HepG2 (cell line): ENCODE measurements at regions of chr14 and their contacts with region 1.

Region 1: DNA sequence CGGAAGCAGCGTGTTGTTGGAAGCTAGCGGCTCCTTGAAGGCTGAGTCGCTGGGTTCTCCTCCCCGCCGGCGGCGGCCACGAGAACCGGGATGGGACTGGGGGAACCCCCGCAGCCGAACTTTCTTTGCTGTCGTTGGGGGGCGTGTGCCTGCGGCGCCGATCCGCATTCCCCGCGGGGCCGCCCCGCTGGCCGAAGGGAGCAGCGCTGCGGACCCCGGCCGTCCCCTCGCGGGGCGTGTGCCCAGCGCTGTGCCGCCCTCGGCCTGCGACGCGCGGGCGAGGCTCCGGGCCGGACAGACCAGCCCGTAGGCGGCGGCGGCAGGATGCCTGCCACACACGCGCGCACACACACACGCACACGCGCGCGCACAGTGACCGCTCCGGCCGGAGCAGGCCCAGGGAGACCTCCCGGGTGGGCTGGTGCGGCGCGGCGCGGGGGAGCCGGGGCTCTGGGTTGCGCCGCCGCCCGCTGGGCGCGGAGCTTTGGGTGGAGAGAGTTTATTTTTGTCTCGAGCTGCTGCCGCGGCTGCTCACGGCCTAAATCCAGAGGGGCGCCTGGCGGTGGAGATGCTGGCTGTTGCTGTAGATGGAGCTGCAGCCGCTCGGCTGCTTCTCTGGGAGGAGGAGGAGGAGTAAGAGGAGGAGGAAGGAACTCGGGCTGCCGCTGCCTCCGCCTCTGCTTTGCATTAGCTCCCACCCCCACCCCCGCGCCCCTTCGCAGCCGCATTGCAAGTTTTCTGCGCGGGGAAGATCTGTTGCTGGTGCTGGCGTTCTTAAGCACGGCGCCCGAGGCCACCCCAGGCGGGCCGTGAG is at the start of gene SAMD4A:
- DNase-seq: peak; percentile 48
- ATAC-seq: peak; percentile 19
- H3K4me3 ChIP-seq: peak within 1 kb of the TSS; percentile 73 to 93 (median 89)
- H3K27ac ChIP-seq: peak within 1 kb of the TSS; percentile 97
- H3K4me1 ChIP-seq: peaks cover 35% of the 10 kb centered on the region
- H3K27me3 ChIP-seq: no peaks in the 10 kb centered on the region
- CTCF ChIP-seq: no peak; the same call in none of the 2 replicates
- EP300 ChIP-seq: no peak
- POLR2A ChIP-seq: no peak; a peak in 1 of 4 replicates
- RAD21 ChIP-seq: no peak
- total RNA-seq, gene SAMD4A: 6.9 and 13.0 TPM in 2 replicates

Region 2: GRCh38 chr14:54343272-54344121 is 223.1 kb before region 1 on chr14:
- CTCF ChIA-PET with region 1: no interaction called
- POLR2A ChIA-PET with region 1: no interaction called
- in situ Hi-C with region 1: no loop called
- intact Hi-C with region 1: no loop called
- DNase-seq: peak; percentile 34
- ATAC-seq: peak; percentile 35; the same call in 1 of the 3 replicates
- H3K4me3 ChIP-seq: no peak overlapping the region
- H3K27ac ChIP-seq: no peak overlapping the region
- H3K4me1 ChIP-seq: peaks cover 25% of the 10 kb centered on the region
- H3K27me3 ChIP-seq: no peaks in the 10 kb centered on the region
- CTCF ChIP-seq: no peak
- EP300 ChIP-seq: no peak
- POLR2A ChIP-seq: no peak
- RAD21 ChIP-seq: no peak

Region 3: GRCh38 chr14:54555651-54556050 is 11.0 kb before region 1 on chr14:
- CTCF ChIA-PET with region 1: no interaction called
- POLR2A ChIA-PET with region 1: interaction called, 17 read pairs
- in situ Hi-C with region 1: no loop called
- intact Hi-C with region 1: no loop called
- DNase-seq: no peak
- ATAC-seq: peak; percentile 60
- H3K4me3 ChIP-seq: no peak overlapping the region
- H3K27ac ChIP-seq: no peak overlapping the region
- H3K4me1 ChIP-seq: peaks cover 23% of the 10 kb centered on the region
- H3K27me3 ChIP-seq: no peaks in the 10 kb centered on the region
- CTCF ChIP-seq: peak; percentile 21; the same call in 1 of the 2 replicates
- EP300 ChIP-seq: no peak
- POLR2A ChIP-seq: no peak
- RAD21 ChIP-seq: no peak

Region 4: GRCh38 chr14:54652188-54652587 is 85.6 kb after region 1 on chr14:
- CTCF ChIA-PET with region 1: no interaction called
- POLR2A ChIA-PET with region 1: interaction called, 35 read pairs
- in situ Hi-C with region 1: loop called (anchors 5 kb)
- intact Hi-C with region 1: loop called (anchors 5 kb)
- DNase-seq: peak; percentile 91
- ATAC-seq: peak; percentile 85
- H3K4me3 ChIP-seq: peak overlapping the region in 1 of 3 experiments; percentile 6; a peak in 1 of 6 replicates
- H3K27ac ChIP-seq: peak overlapping the region; percentile 82
- H3K4me1 ChIP-seq: peaks cover 99% of the 10 kb centered on the region
- H3K27me3 ChIP-seq: no peaks in the 10 kb centered on the region
- CTCF ChIP-seq: no peak
- EP300 ChIP-seq: peak in 1 of 2 experiments; percentile 76; a peak in 2 of 4 replicates
- POLR2A ChIP-seq: no peak
- RAD21 ChIP-seq: no peak

Region 5: DNA sequence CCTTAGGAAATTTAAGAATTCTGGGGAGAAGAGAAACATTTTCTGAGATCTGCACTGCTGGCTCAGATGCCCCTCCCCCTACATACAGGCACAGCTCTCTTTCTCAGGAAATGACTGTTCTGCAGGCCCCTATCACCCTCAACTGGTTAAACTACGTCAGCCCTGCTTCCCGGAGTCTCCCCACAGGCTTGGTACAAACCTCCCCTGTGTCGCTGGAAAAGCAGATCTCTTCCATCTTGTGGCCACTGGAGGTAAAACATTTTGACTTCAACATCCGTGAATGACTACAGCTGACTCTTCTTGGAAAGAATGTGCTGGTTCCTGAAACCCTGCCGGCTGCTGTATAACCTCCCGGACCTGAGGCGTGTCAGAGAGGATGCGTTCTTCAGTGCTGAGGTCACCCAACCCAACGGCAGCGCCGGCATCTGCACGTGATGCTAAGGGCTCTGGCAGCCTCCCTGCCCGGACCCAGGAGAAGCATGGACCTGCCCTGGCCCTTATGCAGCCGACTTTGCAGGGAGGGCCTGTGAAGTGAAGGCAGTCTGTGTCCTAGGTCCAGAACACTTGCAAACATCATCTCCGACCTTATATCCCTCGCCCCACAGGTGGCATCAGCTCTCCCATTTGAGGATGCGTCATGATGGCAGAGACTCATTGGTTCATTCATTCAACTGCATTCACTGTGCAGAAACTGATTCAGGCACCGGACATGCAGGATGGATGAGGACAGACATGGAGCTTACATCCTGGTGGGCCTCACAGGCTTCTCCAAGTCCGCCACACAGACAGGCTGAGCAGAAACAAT is 206.8 kb after region 1 on chr14:
- CTCF ChIA-PET with region 1: interaction called, 39 read pairs
- POLR2A ChIA-PET with region 1: interaction called, 4 read pairs
- in situ Hi-C with region 1: loop called (anchors 5 kb)
- intact Hi-C with region 1: loop called (anchors 1 kb)
- DNase-seq: peak; percentile 78
- ATAC-seq: peak; percentile 93
- H3K4me3 ChIP-seq: no peak overlapping the region
- H3K27ac ChIP-seq: peak overlapping the region; percentile 8
- H3K4me1 ChIP-seq: peaks cover 25% of the 10 kb centered on the region
- H3K27me3 ChIP-seq: no peaks in the 10 kb centered on the region
- CTCF ChIP-seq: peak; percentile 63
- EP300 ChIP-seq: no peak
- POLR2A ChIP-seq: no peak
- RAD21 ChIP-seq: peak; percentile 41; the same call in 1 of the 2 replicates

Region 6: DNA sequence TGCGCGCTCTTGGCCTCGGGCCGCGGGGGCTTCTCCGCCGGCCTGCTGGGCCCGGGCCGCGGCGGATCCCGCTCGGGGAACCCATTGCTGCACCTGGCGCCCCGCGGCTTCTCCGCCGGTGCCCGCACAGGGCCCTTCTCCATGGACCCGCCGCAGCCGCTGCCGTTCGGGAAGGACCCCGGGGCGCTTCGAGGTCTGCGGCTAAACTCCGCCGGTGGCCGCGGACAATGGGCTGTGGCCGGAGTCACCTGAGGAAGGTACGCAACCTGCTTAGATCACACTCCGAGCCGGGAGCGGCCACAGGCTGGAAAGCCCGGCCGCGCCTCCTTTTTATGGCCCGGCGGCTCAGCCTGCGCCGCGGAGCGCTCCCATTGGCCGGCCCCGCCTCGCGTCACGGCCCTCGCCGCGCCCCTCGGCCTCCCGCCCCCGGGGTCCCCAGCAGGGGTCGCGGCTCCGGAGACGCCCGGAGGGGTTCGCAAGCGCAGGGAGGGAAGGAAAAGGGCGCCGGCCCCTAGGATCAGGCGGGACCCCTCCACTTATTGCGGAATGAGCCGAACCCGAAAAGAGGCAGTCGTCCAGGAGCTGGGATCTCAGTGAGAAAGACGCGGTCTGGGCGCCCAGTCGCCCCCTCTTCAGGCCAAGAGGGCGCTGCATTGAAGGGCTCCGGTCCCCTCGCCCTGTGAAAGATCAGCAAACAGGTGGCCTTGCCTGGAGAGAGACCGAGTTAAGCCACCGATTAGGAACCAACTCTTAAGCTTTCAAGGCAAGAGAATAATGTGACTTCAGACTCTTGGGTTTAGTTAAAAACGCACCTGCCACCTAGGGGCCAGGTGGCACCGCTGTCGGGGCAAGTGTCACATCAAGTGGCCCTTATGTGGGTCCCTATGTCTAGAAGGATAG is 336.2 kb after region 1 on chr14 and contains the start of gene GCH1:
- CTCF ChIA-PET with region 1: no interaction called
- POLR2A ChIA-PET with region 1: no interaction called
- in situ Hi-C with region 1: no loop called
- intact Hi-C with region 1: loop called (anchors 10 kb)
- DNase-seq: peak; percentile 72
- ATAC-seq: peak; percentile 94
- H3K4me3 ChIP-seq: peak within 1 kb of the TSS; percentile 82 to 98 (median 93)
- H3K27ac ChIP-seq: peak within 1 kb of the TSS; percentile 92
- H3K4me1 ChIP-seq: peaks cover 33% of the 10 kb centered on the region
- H3K27me3 ChIP-seq: no peaks in the 10 kb centered on the region; a peak in 1 of 5 replicates
- CTCF ChIP-seq: peak; percentile 72
- EP300 ChIP-seq: no peak
- POLR2A ChIP-seq: peak; percentile 98 to 99
- RAD21 ChIP-seq: peak; percentile 39; the same call in 1 of the 2 replicates
- total RNA-seq, gene GCH1: 25.2 and 33.2 TPM in 2 replicates